ENCODE measurements at regions of chrX and their contacts with region 1.

Region 1: GRCh38 chrX:154980330-154981096 is 42.0 kb downstream of the F8 start:
- DNase-seq: peak; percentile 58 to 85 (median 70)
- ATAC-seq: peak; percentile 99
- H3K4me3 ChIP-seq: peak overlapping the region; percentile 51
- H3K4me3 Mint-ChIP-seq: peak overlapping the region; percentile 89
- H3K27ac ChIP-seq: no peak overlapping the region
- H3K27ac Mint-ChIP-seq: peak overlapping the region; percentile 75
- H3K4me1 ChIP-seq: peaks cover 7% of the 10 kb centered on the region
- H3K4me1 Mint-ChIP-seq: peaks cover 8% of the 10 kb centered on the region
- H3K27me3 ChIP-seq: no peaks in the 10 kb centered on the region
- H3K27me3 Mint-ChIP-seq: no peaks in the 10 kb centered on the region
- CTCF ChIP-seq: peak; percentile 74

Region 2: DNA sequence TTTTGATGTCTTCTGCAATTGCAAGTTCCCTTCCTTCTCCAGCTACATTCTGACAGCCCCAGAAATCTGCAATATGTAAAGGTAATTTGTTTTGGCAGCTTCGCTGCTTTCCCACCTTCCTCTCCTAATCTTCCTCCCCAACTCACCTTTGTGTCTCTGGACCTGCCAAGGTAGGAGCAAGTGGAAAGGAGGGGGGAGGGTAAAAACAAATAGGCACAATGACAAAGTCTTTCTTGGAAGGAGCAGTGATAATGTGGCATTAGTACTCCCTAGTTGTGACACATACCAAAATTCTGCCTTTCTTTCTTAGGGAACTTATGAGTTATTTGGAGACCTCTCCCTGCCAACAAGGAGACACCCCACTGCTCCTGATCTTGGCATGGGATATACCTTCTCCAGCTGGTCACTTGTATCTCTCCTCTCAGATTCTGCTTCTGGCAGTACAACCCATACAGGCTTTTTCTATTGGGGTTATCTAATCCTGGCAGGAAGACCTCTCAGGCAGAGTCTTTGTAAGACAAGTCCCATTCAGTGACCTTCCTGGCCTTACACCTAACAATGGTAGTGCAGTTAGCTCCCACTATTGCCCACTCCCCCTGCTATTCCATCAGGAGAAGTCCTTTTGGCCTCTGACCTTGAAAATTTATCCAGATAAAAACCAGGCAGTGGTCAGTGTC is 17.8 kb after region 1 on chrX:
- CTCF ChIA-PET with region 1: no interaction called
- POLR2A ChIA-PET with region 1: no interaction called
- intact Hi-C with region 1: no loop called
- DNase-seq: no peak
- ATAC-seq: no peak
- H3K4me3 ChIP-seq: no peak overlapping the region
- H3K4me3 Mint-ChIP-seq: no peak overlapping the region
- H3K27ac ChIP-seq: no peak overlapping the region
- H3K27ac Mint-ChIP-seq: no peak overlapping the region
- H3K4me1 ChIP-seq: no peaks in the 10 kb centered on the region
- H3K4me1 Mint-ChIP-seq: no peaks in the 10 kb centered on the region
- H3K27me3 ChIP-seq: no peaks in the 10 kb centered on the region
- H3K27me3 Mint-ChIP-seq: peaks cover 5% of the 10 kb centered on the region
- CTCF ChIP-seq: no peak

Region 3: DNA sequence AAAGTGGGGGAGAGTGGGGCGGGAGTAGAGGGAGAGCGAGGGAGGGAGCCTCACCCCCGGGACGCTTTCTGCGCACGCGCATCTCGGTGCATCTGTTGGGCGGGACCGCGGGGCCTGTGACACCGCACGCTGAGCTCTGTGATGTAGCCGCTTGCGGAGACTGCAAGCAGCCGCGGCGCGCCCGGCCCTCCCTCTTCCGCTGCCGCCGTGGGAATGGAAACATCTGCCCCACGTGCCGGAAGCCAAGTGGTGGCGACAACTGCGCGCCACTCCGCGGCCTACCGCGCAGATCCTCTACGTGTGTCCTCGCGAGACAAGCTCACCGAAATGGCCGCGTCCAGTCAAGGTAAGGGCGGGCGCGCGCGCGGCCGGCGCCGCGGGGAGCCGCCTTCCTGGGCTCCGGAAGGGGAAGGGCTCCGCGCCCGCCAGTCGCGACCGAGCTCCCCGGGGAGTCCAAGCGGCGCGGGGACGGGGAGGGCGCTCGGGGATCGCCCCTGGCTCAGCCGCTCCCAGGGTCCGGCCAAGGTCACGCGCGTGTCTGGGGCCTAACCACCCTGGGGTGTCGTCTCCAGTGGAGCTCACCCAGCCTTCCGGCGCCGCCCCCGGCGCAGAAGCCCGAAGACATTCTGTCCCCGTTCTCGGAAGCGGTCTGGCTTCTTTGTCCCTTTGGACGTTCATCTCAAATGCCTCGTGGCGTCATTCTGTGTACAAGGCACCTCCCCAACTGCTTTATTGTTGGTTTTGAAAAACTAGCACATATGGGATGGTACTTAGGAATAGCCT is 46.4 kb after region 1 on chrX and contains the start of gene FUNDC2:
- CTCF ChIA-PET with region 1: no interaction called
- POLR2A ChIA-PET with region 1: interaction called, 4 read pairs
- intact Hi-C with region 1: loop called in 1 of 2 experiments (anchors 2 kb)
- DNase-seq: peak; percentile 87 to 98 (median 92)
- ATAC-seq: peak; percentile 86
- H3K4me3 ChIP-seq: peak within 1 kb of the TSS; percentile 88
- H3K4me3 Mint-ChIP-seq: peak within 1 kb of the TSS; percentile 95
- H3K27ac ChIP-seq: peak within 1 kb of the TSS; percentile 88 to 94
- H3K27ac Mint-ChIP-seq: peak within 1 kb of the TSS; percentile 98
- H3K4me1 ChIP-seq: peaks cover 8% of the 10 kb centered on the region
- H3K4me1 Mint-ChIP-seq: peaks cover 42% of the 10 kb centered on the region
- H3K27me3 ChIP-seq: no peaks in the 10 kb centered on the region
- H3K27me3 Mint-ChIP-seq: no peaks in the 10 kb centered on the region
- CTCF ChIP-seq: no peak
- total RNA-seq, gene FUNDC2: 37.2 to 37.4 TPM

Region 4: DNA sequence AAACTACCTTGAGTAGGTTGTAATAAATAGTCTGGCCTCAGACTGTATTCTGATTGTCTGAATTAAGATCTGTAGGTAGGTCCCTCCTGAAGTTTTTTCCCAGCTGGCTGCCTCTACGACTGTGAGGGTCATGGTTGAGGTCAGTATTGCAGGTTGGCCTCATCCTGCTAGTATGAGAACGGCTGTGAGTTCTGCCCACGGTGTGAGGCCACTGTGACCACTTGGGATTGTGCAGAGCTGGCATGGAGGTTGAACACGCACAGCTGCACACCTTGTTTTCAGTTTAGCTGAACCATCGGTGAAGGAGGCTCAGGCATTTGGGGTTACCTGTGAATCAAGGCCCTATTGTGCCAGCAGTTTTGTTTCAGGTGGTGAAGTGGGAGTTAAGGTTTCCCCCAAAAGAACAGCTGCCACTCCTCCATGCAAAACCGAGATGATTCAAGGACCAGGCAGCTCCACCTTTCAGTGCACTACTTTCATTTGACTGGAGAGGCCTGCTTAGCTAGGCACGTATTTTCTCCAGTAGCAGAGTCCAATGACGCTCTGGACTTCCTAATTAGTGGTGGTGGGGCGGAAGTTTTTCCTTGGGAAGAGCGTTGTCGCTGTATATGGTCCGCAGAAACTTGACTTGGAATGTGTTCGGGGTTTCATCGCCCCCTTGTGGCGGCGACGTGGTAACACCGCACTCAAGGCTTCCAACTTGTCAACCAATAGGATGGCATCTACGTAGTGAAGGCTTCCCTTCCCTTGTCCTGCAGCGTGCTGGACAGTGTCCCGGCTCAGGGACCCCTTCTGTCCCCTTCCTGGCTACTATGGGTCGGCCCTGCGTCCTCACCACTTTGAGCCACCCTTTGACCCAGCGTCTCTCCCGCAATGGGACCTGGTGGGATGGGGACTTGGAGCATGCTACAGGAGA is 76.6 kb after region 1 on chrX:
- CTCF ChIA-PET with region 1: interaction called, 5 read pairs
- POLR2A ChIA-PET with region 1: no interaction called
- intact Hi-C with region 1: loop called (anchors 1 kb)
- DNase-seq: peak; percentile 19 to 79 (median 38)
- ATAC-seq: peak; percentile 84
- H3K4me3 ChIP-seq: peak overlapping the region; percentile 35
- H3K4me3 Mint-ChIP-seq: peak overlapping the region; percentile 85
- H3K27ac ChIP-seq: no peak overlapping the region
- H3K27ac Mint-ChIP-seq: peak overlapping the region; percentile 61
- H3K4me1 ChIP-seq: peaks cover 14% of the 10 kb centered on the region
- H3K4me1 Mint-ChIP-seq: peaks cover 16% of the 10 kb centered on the region
- H3K27me3 ChIP-seq: no peaks in the 10 kb centered on the region
- H3K27me3 Mint-ChIP-seq: no peaks in the 10 kb centered on the region
- CTCF ChIP-seq: peak; percentile 69

Region 5: GRCh38 chrX:155086202-155086840 is 105.8 kb after region 1 on chrX:
- CTCF ChIA-PET with region 1: no interaction called
- POLR2A ChIA-PET with region 1: no interaction called
- intact Hi-C with region 1: loop called in 1 of 2 experiments (anchors 2 kb)
- DNase-seq: peak in 13 of 14 experiments; percentile 5 to 67 (median 24)
- ATAC-seq: peak; percentile 34
- H3K4me3 ChIP-seq: no peak overlapping the region
- H3K4me3 Mint-ChIP-seq: no peak overlapping the region
- H3K27ac ChIP-seq: no peak overlapping the region
- H3K27ac Mint-ChIP-seq: no peak overlapping the region
- H3K4me1 ChIP-seq: no peaks in the 10 kb centered on the region
- H3K4me1 Mint-ChIP-seq: no peaks in the 10 kb centered on the region
- H3K27me3 ChIP-seq: no peaks in the 10 kb centered on the region
- H3K27me3 Mint-ChIP-seq: no peaks in the 10 kb centered on the region
- CTCF ChIP-seq: peak; percentile 51

Region 6: GRCh38 chrX:155216179-155216939 is 235.8 kb after region 1 on chrX and contains the start of gene VBP1:
- CTCF ChIA-PET with region 1: no interaction called
- POLR2A ChIA-PET with region 1: no interaction called
- intact Hi-C with region 1: loop called (anchors 5 to 10 kb)
- DNase-seq: peak; percentile 73 to 94 (median 81)
- ATAC-seq: peak; percentile 97
- H3K4me3 ChIP-seq: peak within 1 kb of the TSS; percentile 92
- H3K4me3 Mint-ChIP-seq: peak within 1 kb of the TSS; percentile 99
- H3K27ac ChIP-seq: peak within 1 kb of the TSS; percentile 70 to 75
- H3K27ac Mint-ChIP-seq: peak within 1 kb of the TSS; percentile 96
- H3K4me1 ChIP-seq: peaks cover 17% of the 10 kb centered on the region
- H3K4me1 Mint-ChIP-seq: peaks cover 35% of the 10 kb centered on the region
- H3K27me3 ChIP-seq: no peaks in the 10 kb centered on the region
- H3K27me3 Mint-ChIP-seq: no peaks in the 10 kb centered on the region
- CTCF ChIP-seq: peak; percentile 49
- total RNA-seq, gene VBP1: 8.5 to 8.7 TPM

Region 7: DNA sequence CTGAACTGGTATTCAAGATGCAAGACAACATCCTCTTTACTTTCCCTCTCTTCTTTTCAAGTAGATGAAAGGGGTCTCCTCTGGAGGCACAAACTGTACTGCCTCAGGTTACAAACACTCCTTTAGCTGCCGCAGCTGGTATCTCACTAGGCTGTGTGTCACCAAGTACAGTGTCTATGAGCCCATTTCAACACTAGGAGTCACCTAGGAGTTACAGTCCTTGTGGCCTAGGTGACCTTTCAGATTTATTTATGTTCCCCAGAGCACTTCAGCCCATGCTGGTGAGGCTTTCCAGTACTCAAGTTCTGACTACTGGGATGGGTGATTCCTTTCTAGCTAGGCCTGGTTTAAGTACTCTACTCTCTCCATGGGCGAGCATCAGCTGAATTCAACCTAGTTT is 664.7 kb after region 1 on chrX:
- CTCF ChIA-PET with region 1: no interaction called
- POLR2A ChIA-PET with region 1: no interaction called
- intact Hi-C with region 1: loop called in 1 of 2 experiments (anchors 5 kb)
- DNase-seq: no peak
- ATAC-seq: no peak
- H3K4me3 ChIP-seq: no peak overlapping the region
- H3K4me3 Mint-ChIP-seq: no peak overlapping the region
- H3K27ac ChIP-seq: no peak overlapping the region
- H3K27ac Mint-ChIP-seq: no peak overlapping the region
- H3K4me1 ChIP-seq: no peaks in the 10 kb centered on the region
- H3K4me1 Mint-ChIP-seq: peaks cover 5% of the 10 kb centered on the region
- H3K27me3 ChIP-seq: no peaks in the 10 kb centered on the region
- H3K27me3 Mint-ChIP-seq: no peaks in the 10 kb centered on the region
- CTCF ChIP-seq: no peak

Region 8: DNA sequence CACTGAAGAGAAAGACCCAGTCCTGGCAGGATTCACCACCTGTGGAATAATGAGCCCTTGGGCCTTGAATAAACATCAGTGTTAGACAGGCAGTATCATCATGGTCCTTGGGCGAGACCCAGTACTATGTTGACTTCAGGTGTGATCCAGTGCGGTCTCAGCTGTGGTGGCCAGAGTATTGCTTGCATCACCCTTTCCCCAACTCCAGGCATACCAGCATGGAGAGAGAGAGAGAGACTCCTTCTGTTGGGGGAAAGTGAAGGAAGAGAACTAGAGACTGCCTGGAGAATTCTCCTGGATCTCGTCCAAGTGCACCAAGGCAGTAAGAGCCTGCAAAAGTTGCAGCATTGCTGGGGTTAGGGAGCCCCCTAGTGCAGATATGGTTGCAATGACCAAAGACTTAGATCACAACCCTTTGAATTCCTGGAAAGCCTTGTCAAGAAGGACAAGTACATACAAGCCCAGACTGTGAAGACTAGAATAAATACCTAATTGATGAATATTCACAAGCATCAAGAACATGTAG is 839.5 kb after region 1 on chrX:
- CTCF ChIA-PET with region 1: no interaction called
- POLR2A ChIA-PET with region 1: no interaction called
- intact Hi-C with region 1: loop called in 1 of 2 experiments (anchors 2 kb)
- DNase-seq: peak; percentile 6 to 69 (median 23)
- ATAC-seq: peak; percentile 41
- H3K4me3 ChIP-seq: no peak overlapping the region
- H3K4me3 Mint-ChIP-seq: no peak overlapping the region
- H3K27ac ChIP-seq: no peak overlapping the region
- H3K27ac Mint-ChIP-seq: no peak overlapping the region
- H3K4me1 ChIP-seq: no peaks in the 10 kb centered on the region
- H3K4me1 Mint-ChIP-seq: no peaks in the 10 kb centered on the region
- H3K27me3 ChIP-seq: no peaks in the 10 kb centered on the region
- H3K27me3 Mint-ChIP-seq: peaks cover 29% of the 10 kb centered on the region
- CTCF ChIP-seq: peak; percentile 58

Measured in CD4-positive, alpha-beta T cell (primary cell).